PC-9 (cell line): ENCODE measurements at regions of chr5 and their contacts with region 1.

Region 1: DNA sequence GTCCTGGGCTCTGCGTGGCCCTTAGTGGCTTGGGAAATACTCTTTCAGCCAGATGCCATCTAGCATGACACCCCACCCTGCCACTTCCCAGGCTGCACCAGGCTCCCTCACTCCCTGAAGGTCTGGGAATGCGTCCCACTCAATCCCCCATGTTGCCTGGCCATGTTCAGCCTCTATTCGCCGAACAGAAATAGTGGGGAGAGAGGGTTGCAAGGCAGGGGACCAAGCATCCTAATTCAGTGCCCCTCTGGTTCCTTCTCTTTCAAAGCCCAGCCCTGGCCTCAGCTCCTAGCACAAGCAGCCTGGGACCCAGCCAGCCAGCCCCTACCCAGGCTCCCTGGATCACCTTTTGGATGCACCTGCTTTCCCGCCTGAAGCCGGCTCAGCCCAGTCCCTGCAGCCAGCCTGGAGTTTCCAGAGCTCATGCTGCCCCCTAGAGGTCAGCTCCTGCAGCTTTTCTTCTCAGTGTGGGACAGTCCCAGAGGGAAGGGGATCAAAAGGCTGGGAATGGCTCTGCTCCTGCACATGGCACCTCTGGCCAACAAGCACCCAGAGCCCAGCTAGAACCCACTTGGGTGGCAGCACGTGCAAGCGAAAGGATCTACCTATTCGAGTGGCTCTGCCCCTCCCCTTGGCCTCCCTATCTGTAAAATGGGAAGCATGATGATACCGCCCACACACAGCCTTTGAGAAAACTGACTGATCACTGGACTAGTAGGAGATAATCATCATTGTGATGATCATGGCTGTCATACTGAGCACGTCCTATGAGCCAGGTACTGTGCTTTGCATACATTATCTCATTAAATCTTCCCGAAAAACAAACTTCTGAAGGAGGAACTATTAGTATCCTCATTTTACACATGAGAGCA is 48.7 kb upstream of the C5orf58 start:
- DNase-seq: peak in 1 of 2 experiments; percentile 80
- H3K4me3 ChIP-seq: no peak overlapping the region
- H3K27ac ChIP-seq: no peak overlapping the region
- H3K4me1 ChIP-seq: peaks cover 21% of the 10 kb centered on the region
- H3K27me3 ChIP-seq: no peaks in the 10 kb centered on the region
- CTCF ChIP-seq: peak; percentile 93

Region 2: GRCh38 chr5:169701910-169702451 is 482.1 kb before region 1 on chr5:
- CTCF ChIA-PET with region 1: no interaction called
- POLR2A ChIA-PET with region 1: no interaction called
- intact Hi-C with region 1: loop called (anchors 10 kb)
- DNase-seq: peak in 1 of 2 experiments; percentile 56
- H3K4me3 ChIP-seq: no peak overlapping the region
- H3K27ac ChIP-seq: no peak overlapping the region
- H3K4me1 ChIP-seq: peaks cover 11% of the 10 kb centered on the region
- H3K27me3 ChIP-seq: no peaks in the 10 kb centered on the region
- CTCF ChIP-seq: peak; percentile 65; the same call in 1 of the 2 replicates

Region 3: GRCh38 chr5:170120576-170120975 is 63.5 kb before region 1 on chr5:
- CTCF ChIA-PET with region 1: no interaction called
- POLR2A ChIA-PET with region 1: no interaction called
- intact Hi-C with region 1: loop called (anchors 5 kb)
- DNase-seq: peak; percentile 18 to 76
- H3K4me3 ChIP-seq: no peak overlapping the region
- H3K27ac ChIP-seq: peak overlapping the region; percentile 66
- H3K4me1 ChIP-seq: peaks cover 23% of the 10 kb centered on the region
- H3K27me3 ChIP-seq: no peaks in the 10 kb centered on the region
- CTCF ChIP-seq: no peak

Region 4: DNA sequence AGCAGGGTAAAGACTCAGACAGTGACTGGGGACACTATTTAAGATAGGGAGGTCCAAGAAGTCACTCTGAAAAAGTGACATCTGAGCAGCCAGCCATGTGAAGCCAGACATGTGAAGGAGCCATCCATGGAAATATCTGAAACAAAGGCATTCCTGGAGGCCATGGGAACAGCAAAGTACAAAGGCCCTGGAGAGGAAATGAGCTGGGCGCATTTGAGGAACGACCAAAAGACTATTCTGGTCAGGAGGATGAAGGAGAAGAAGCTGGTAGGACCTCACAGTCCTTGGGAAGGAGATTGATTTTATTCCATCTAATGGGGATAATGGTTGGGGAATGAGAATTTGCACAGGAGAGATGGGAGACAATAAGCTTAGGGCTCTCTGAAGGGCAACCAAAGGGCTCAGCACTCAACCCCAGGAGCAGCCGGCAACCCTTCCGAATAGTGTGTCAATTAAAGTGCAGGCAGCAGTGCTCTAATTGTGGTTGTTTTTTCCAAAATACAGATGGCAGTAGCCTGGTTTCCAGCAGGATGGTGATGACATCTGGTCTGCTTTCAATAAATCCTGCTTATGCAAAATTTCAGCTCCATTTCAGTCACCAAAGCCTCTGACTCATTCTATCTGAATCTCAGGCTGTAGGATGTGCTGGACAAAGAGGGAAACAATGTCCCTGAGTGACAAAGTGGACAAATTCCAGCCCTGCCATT is 51.6 kb before region 1 on chr5:
- CTCF ChIA-PET with region 1: no interaction called
- POLR2A ChIA-PET with region 1: no interaction called
- intact Hi-C with region 1: no loop called
- DNase-seq: peak; percentile 37 to 80
- H3K4me3 ChIP-seq: no peak overlapping the region
- H3K27ac ChIP-seq: peak overlapping the region; percentile 78
- H3K4me1 ChIP-seq: peaks cover 57% of the 10 kb centered on the region
- H3K27me3 ChIP-seq: no peaks in the 10 kb centered on the region
- CTCF ChIP-seq: no peak

Region 5: GRCh38 chr5:170302653-170303501 is 118.8 kb after region 1 on chr5:
- CTCF ChIA-PET with region 1: no interaction called
- POLR2A ChIA-PET with region 1: no interaction called
- intact Hi-C with region 1: no loop called
- DNase-seq: no peak
- H3K4me3 ChIP-seq: no peak overlapping the region
- H3K27ac ChIP-seq: no peak overlapping the region
- H3K4me1 ChIP-seq: peaks cover 18% of the 10 kb centered on the region
- H3K27me3 ChIP-seq: no peaks in the 10 kb centered on the region
- CTCF ChIP-seq: no peak